T-cell (primary cell): ENCODE measurements at regions of chr17 and their contacts with region 1.

Region 1: DNA sequence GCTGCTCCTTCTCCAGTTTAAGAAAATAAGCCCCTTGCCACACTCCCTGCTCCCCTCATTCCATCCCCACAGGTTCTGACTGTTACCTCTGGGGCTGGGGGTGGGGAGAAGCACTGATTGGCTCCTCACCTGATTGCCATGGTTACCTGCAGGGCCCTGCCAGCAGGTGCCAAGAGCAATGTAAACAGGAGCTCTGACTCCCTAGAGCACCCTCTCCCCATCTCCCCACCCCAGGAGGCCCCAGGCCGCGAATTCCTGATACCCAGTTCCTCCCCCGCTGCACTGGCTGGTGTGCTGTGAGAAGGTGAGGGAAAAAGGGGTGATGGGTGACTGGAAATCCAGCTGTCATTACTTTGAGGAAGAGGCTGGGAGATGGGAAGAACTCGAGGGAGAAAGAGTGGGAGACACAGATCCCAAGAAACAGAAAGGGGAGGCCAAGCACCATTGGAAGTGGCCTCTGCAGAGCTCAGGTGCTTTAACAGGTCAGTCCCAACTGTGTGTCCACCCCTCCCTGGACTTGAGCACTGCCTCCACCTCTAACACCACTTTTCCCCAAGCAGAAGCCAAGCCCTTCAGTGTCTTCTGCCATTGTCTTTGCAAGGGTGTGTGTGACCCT is 4.5 kb downstream of the PCGF2 start:
- DNase-seq: no peak
- ATAC-seq: no peak
- H3K4me3 ChIP-seq: no peak overlapping the region
- H3K4me3 Mint-ChIP-seq: no peak overlapping the region
- H3K27ac ChIP-seq: no peak overlapping the region
- H3K27ac Mint-ChIP-seq: no peak overlapping the region
- H3K4me1 ChIP-seq: peaks cover 18 to 25% of the 10 kb centered on the region in 2 experiments
- H3K4me1 Mint-ChIP-seq: peaks cover 13 to 17% (median 14%) of the 10 kb centered on the region in 3 donors
- H3K27me3 ChIP-seq: peaks cover 0 to 82% of the 10 kb centered on the region in 2 experiments
- H3K27me3 Mint-ChIP-seq: peaks cover 15 to 46% of the 10 kb centered on the region in 2 donors

Region 2: DNA sequence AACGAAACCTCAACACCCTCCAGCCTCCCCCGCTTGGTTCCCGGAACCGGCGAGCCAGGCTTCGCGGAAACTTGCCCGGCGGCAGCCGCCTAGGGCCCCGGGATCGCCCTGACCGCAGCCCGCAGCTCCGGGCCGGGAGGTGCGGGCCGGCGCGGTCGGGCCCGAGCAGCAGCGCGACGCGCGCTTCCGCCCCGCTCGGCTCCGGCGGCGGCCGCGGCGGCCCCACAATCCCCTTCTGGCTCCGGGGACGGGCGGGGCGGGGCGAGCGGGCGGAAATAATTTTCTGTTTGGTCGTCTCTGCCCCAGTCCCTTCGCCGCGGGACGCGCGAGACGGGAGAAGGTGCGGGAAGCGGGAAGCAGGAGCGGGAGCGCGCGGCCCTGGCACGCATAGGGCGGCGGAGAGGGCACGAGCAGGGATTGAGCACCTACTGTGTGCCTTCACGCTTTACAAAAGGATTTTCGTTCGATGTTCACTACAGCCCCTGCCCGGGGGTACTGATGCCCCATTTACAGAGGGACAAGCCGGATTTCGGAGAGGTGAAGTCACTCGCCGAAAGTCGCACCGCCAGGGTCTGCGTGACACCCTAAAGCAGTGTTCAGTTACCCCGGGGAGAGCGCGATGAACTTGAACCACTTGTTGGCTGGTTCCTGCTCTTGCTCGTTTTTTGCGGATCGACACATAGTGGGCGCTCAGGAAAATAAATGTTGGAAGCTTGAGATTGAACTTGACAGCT is 41.3 kb before region 1 on chr17:
- CTCF ChIA-PET with region 1: no interaction called
- POLR2A ChIA-PET with region 1: no interaction called
- DNase-seq: peak; percentile 57 to 89 (median 71)
- ATAC-seq: peak; percentile 54 to 64 (median 59)
- H3K4me3 ChIP-seq: peak overlapping the region; percentile 97 to 98
- H3K4me3 Mint-ChIP-seq: peak overlapping the region; percentile 91 to 96 (median 92)
- H3K27ac ChIP-seq: peak overlapping the region; percentile 98
- H3K27ac Mint-ChIP-seq: peak overlapping the region; percentile 98 to 99
- H3K4me1 ChIP-seq: peaks cover 8 to 55% of the 10 kb centered on the region in 2 experiments
- H3K4me1 Mint-ChIP-seq: peaks cover 42 to 51% (median 47%) of the 10 kb centered on the region in 3 donors
- H3K27me3 ChIP-seq: no peaks in the 10 kb centered on the region
- H3K27me3 Mint-ChIP-seq: no peaks in the 10 kb centered on the region

Region 3: GRCh38 chr17:38815576-38816193 is 72.0 kb after region 1 on chr17:
- CTCF ChIA-PET with region 1: no interaction called
- POLR2A ChIA-PET with region 1: interaction called in 1 of 2 experiments, 12 read pairs
- DNase-seq: peak in 3 of 35 experiments; percentile 5 to 49 (median 7)
- ATAC-seq: peak in 1 of 4 experiments; percentile 45
- H3K4me3 ChIP-seq: no peak overlapping the region
- H3K4me3 Mint-ChIP-seq: no peak overlapping the region
- H3K27ac ChIP-seq: no peak overlapping the region
- H3K27ac Mint-ChIP-seq: peak overlapping the region in 1 of 2 donors; percentile 1
- H3K4me1 ChIP-seq: peaks cover 0 to 6% of the 10 kb centered on the region in 2 experiments
- H3K4me1 Mint-ChIP-seq: peaks cover 0 to 13% (median 12%) of the 10 kb centered on the region in 3 donors
- H3K27me3 ChIP-seq: no peaks in the 10 kb centered on the region
- H3K27me3 Mint-ChIP-seq: no peaks in the 10 kb centered on the region